ENCODE measurements at regions of chr10 and their contacts with region 1.

Region 1: DNA sequence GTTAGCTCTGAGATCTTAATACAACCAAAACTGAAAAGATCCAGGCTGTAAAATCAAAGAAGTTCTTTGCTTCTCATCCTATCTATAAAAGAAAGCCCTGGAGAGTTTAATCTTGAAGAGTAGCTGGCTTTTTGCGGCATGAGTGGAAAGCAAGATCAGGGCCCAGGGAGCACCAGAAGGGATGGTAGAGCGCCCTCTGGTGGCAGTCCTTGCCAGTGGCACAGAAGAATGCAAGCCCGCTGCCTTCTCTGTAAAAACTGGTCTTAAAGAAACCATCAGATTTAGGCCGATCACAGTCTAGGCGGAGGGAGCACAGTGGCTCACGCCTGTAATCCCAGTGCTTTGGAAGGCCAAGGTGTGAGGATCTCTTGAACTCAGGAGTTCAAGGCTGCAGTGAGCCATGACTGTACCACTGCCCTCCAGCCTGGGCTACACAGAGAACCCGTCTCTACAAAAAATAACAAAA is 35.6 kb downstream of the CPN1 start:
- DNase-seq: peak; percentile 97
- H3K4me3 ChIP-seq: no peak overlapping the region
- H3K27ac ChIP-seq: no peak overlapping the region
- H3K4me1 ChIP-seq: peaks cover 15 to 31% (median 24%) of the 10 kb centered on the region in 4 donors
- H3K27me3 ChIP-seq: no peaks in the 10 kb centered on the region
- CTCF ChIP-seq: peak in 2 of 3 experiments; percentile 93 to 95
- EP300 ChIP-seq: no peak
- POLR2A ChIP-seq: no peak

Region 2: DNA sequence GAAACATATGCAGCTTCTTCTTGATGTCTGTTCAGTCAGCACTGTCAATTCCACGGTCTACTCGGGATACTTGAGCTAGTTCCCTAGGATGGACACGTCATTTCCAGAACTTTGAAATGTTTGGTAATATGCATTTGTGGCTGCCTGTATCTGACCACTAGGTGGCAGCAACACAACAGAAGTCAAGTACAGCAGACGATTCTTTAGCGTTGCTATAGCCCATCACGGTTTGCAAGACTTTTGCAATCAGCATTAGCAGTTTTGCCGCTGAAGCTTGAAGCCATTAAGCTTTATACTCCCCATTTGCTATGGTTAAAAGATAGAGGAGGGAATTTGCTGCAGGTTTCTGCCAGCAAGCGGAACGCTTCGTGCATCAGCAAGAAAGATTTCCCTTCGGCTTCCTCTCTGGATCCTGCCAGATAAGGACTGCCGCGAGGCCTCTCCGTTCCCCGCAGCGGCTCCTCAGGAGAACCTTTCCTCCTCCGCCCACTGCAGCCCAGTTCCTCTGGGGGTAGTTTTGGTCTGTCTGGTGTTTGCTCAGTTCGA is 200.1 kb before region 1 on chr10:
- intact Hi-C with region 1: loop called (anchors 1 kb)
- DNase-seq: peak; percentile 95
- H3K4me3 ChIP-seq: peak overlapping the region; percentile 38 to 48 (median 44)
- H3K27ac ChIP-seq: peak overlapping the region in 3 of 4 donors; percentile 22 to 62 (median 39)
- H3K4me1 ChIP-seq: peaks cover 7 to 26% (median 18%) of the 10 kb centered on the region in 4 donors
- H3K27me3 ChIP-seq: no peaks in the 10 kb centered on the region
- CTCF ChIP-seq: peak; percentile 92 to 95 (median 93)
- EP300 ChIP-seq: no peak
- POLR2A ChIP-seq: no peak

Region 3: GRCh38 chr10:100229819-100230422 is 183.9 kb after region 1 on chr10:
- intact Hi-C with region 1: no loop called
- DNase-seq: no peak
- H3K4me3 ChIP-seq: peak overlapping the region; percentile 92 to 97 (median 94)
- H3K27ac ChIP-seq: peak overlapping the region; percentile 77 to 88 (median 84)
- H3K4me1 ChIP-seq: peaks cover 13 to 25% (median 20%) of the 10 kb centered on the region in 4 donors
- H3K27me3 ChIP-seq: no peaks in the 10 kb centered on the region
- CTCF ChIP-seq: no peak
- EP300 ChIP-seq: no peak
- POLR2A ChIP-seq: no peak